ENCODE measurements at regions of chr16 and their contacts with region 1.

Region 1: DNA sequence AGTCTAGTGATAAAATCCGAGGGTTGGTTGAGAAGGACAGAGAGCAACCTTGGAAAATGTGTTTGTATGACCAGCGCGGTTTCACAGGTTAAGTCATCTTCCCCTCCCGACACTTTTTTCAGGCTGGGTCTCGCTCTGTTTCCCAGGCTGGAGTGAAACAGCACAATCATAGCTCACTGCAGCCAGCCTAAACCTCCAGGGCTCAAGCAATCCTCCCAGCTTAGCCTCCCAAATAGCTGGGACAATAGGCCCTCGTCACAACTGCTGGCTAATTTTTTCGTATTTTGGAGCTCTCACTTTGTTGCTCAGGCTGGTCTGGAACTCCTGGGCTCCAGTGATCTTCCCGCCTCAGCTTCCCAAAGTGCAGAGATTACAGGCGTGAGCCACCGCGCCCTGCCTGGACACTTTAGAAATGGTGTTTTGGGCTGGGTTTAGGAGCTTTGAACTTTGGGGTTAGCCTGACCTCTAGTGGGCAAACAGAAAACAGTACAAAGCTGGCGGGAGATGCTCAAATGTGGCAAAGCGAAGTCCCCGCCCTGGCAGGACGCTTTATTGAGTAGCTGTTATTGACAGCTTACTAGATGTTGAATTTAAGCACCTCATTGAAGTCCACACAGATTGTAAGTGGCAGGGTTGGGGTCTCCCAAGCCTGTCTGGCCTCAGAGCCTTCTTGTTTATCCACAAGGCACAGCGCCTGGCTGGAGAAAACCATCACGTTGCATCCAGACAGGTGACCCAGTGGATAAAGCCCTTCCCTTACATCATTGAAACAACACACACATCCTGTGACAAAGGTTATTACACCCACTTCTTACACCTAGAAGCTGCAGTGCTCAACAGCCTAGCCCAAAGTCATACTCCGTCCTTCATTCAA is 34.7 kb upstream of the RBBP6 start:
- DNase-seq: peak; percentile 38 to 72
- H3K4me3 ChIP-seq: no peak overlapping the region
- H3K27ac ChIP-seq: no peak overlapping the region
- H3K4me1 ChIP-seq: no peaks in the 10 kb centered on the region
- H3K27me3 ChIP-seq: no peaks in the 10 kb centered on the region; a peak in 1 of 7 replicates
- CTCF ChIP-seq: peak; percentile 58 to 92 (median 84)
- EP300 ChIP-seq: no peak
- POLR2A ChIP-seq: no peak
- RAD21 ChIP-seq: peak; percentile 95 to 98

Region 2: GRCh38 chr16:24054741-24055491 is 449.8 kb before region 1 on chr16:
- CTCF ChIA-PET with region 1: interaction called, 16 read pairs
- POLR2A ChIA-PET with region 1: no interaction called
- DNase-seq: peak in 1 of 2 experiments; percentile 56
- H3K4me3 ChIP-seq: peak overlapping the region in 1 of 4 experiments; percentile 16; a peak in 2 of 8 replicates
- H3K27ac ChIP-seq: peak overlapping the region; percentile 3; the same call in 1 of the 2 replicates
- H3K4me1 ChIP-seq: peaks cover 5 to 30% (median 12%) of the 10 kb centered on the region in 4 experiments
- H3K27me3 ChIP-seq: no peaks in the 10 kb centered on the region
- CTCF ChIP-seq: no peak
- EP300 ChIP-seq: no peak
- POLR2A ChIP-seq: no peak
- RAD21 ChIP-seq: peak in 1 of 2 experiments; percentile 9; a peak in 1 of 4 replicates

Region 3: GRCh38 chr16:24409049-24409448 is 95.7 kb before region 1 on chr16:
- CTCF ChIA-PET with region 1: interaction called, 14 read pairs
- POLR2A ChIA-PET with region 1: no interaction called
- DNase-seq: no peak
- H3K4me3 ChIP-seq: no peak overlapping the region
- H3K27ac ChIP-seq: no peak overlapping the region
- H3K4me1 ChIP-seq: no peaks in the 10 kb centered on the region
- H3K27me3 ChIP-seq: no peaks in the 10 kb centered on the region
- CTCF ChIP-seq: peak; percentile 50 to 67 (median 57)
- EP300 ChIP-seq: no peak
- POLR2A ChIP-seq: no peak
- RAD21 ChIP-seq: peak; percentile 51 to 68

Region 4: GRCh38 chr16:24491726-24492125 is 13.0 kb before region 1 on chr16:
- CTCF ChIA-PET with region 1: interaction called, 13 read pairs
- POLR2A ChIA-PET with region 1: no interaction called
- DNase-seq: no peak
- H3K4me3 ChIP-seq: no peak overlapping the region
- H3K27ac ChIP-seq: no peak overlapping the region
- H3K4me1 ChIP-seq: no peaks in the 10 kb centered on the region
- H3K27me3 ChIP-seq: peaks cover 0 to 4% (median 2%) of the 10 kb centered on the region in 4 experiments; a peak in 2 of 7 replicates
- CTCF ChIP-seq: no peak
- EP300 ChIP-seq: no peak
- POLR2A ChIP-seq: no peak
- RAD21 ChIP-seq: no peak

Region 5: DNA sequence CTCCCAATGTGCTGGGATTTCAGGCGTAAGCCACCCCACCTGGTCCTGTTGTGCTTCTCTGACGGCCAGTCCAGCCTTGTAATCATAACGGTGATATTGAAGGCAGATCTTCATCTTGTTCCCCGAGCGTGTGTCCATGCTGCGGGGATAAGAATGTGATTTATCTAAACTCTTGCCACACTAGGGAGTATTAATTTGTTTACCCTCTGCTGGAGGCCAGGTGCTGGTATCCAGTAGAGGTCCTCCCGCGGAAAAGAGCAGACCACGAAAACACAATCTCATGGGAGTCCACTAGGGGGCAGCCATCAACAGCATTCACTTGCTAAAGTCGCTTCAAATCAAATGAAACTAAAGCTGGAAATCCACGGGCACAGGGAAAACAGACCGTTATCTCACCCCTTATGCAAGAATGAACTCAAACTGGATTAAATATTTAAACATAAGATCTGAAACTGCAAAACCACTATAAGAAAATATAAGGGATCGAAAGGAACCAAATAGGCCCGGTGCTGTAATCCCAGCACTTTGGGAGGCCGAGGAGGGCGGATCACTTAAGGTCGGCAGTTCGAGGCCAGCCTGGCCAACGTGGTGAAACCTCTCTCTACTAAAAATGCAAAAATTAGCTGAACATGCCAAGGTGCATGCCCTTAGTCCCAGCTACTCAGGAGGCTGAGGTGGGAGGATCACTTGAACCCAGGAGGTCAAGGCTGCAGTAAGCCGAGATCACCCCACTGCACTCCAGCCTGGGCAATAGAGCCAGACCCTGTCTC is 12.4 kb after region 1 on chr16:
- CTCF ChIA-PET with region 1: interaction called, 53 read pairs
- POLR2A ChIA-PET with region 1: no interaction called
- DNase-seq: peak; percentile 43 to 89
- H3K4me3 ChIP-seq: no peak overlapping the region
- H3K27ac ChIP-seq: no peak overlapping the region
- H3K4me1 ChIP-seq: no peaks in the 10 kb centered on the region
- H3K27me3 ChIP-seq: no peaks in the 10 kb centered on the region
- CTCF ChIP-seq: peak; percentile 73 to 97 (median 93)
- EP300 ChIP-seq: no peak
- POLR2A ChIP-seq: no peak
- RAD21 ChIP-seq: peak; percentile 82 to 87